ENCODE measurements at regions of chr11 and their contacts with region 1.

Region 1: GRCh38 chr11:40434926-40435325 is 1024.5 kb downstream of the LRRC4C start:
- DNase-seq: no peak
- ATAC-seq: no peak
- H3K4me3 ChIP-seq: no peak overlapping the region
- H3K27ac ChIP-seq: no peak overlapping the region
- H3K4me1 ChIP-seq: no peaks in the 10 kb centered on the region
- H3K27me3 ChIP-seq: no peaks in the 10 kb centered on the region
- CTCF ChIP-seq: no peak

Region 2: GRCh38 chr11:40321537-40321936 is 113.4 kb before region 1 on chr11:
- CTCF ChIA-PET with region 1: no interaction called
- POLR2A ChIA-PET with region 1: interaction called, 10 read pairs
- in situ Hi-C with region 1: no loop called
- intact Hi-C with region 1: no loop called
- DNase-seq: no peak
- ATAC-seq: no peak
- H3K4me3 ChIP-seq: no peak overlapping the region
- H3K27ac ChIP-seq: no peak overlapping the region
- H3K4me1 ChIP-seq: no peaks in the 10 kb centered on the region
- H3K27me3 ChIP-seq: no peaks in the 10 kb centered on the region
- CTCF ChIP-seq: no peak

Region 3: GRCh38 chr11:40467771-40468170 is 32.8 kb after region 1 on chr11:
- CTCF ChIA-PET with region 1: no interaction called
- POLR2A ChIA-PET with region 1: no interaction called
- in situ Hi-C with region 1: no loop called
- intact Hi-C with region 1: no loop called
- DNase-seq: no peak
- ATAC-seq: no peak
- H3K4me3 ChIP-seq: no peak overlapping the region
- H3K27ac ChIP-seq: no peak overlapping the region
- H3K4me1 ChIP-seq: no peaks in the 10 kb centered on the region; the same call in 1 of the 2 replicates
- H3K27me3 ChIP-seq: no peaks in the 10 kb centered on the region
- CTCF ChIP-seq: no peak

Measured in Panc1 (cell line).